CD14-positive monocyte (primary cell): ENCODE measurements at regions of chr13 and their contacts with region 1.

Region 1: GRCh38 chr13:21176220-21176982 is at the starts of genes MRPL57 and SKA3:
- DNase-seq: peak; percentile 89 to 91 (median 90)
- H3K4me3 ChIP-seq: peak within 1 kb of the TSS; percentile 92 to 98 (median 95)
- H3K4me3 Mint-ChIP-seq: peak within 1 kb of the TSS; percentile 98
- H3K27ac ChIP-seq: peak within 1 kb of the TSS; percentile 92 to 93
- H3K27ac Mint-ChIP-seq: peak within 1 kb of the TSS; percentile 86 to 98 (median 95)
- H3K4me1 ChIP-seq: peaks cover 11 to 18% of the 10 kb centered on the region in 2 donors
- H3K4me1 Mint-ChIP-seq: peaks cover 17% of the 10 kb centered on the region
- H3K27me3 ChIP-seq: no peaks in the 10 kb centered on the region
- H3K27me3 Mint-ChIP-seq: no peaks in the 10 kb centered on the region
- CTCF ChIP-seq: no peak
- polyA plus RNA-seq, gene MRPL57: 6.8 to 52.3 (median 41.1) TPM
- polyA plus RNA-seq, gene SKA3: 0.12 to 2.5 (median 0.49) TPM

Region 2: GRCh38 chr13:20940083-20940880 is 236.1 kb before region 1 on chr13:
- intact Hi-C with region 1: loop called (anchors 5 to 10 kb)
- DNase-seq: no peak
- H3K4me3 ChIP-seq: no peak overlapping the region
- H3K4me3 Mint-ChIP-seq: no peak overlapping the region
- H3K27ac ChIP-seq: no peak overlapping the region
- H3K27ac Mint-ChIP-seq: no peak overlapping the region
- H3K4me1 ChIP-seq: peaks cover 12 to 13% of the 10 kb centered on the region in 2 donors
- H3K4me1 Mint-ChIP-seq: peaks cover 13% of the 10 kb centered on the region
- H3K27me3 ChIP-seq: no peaks in the 10 kb centered on the region
- H3K27me3 Mint-ChIP-seq: peaks cover 0 to 7% (median 5%) of the 10 kb centered on the region in 3 donors
- CTCF ChIP-seq: no peak

Region 3: GRCh38 chr13:20945952-20946383 is 230.4 kb before region 1 on chr13:
- intact Hi-C with region 1: loop called (anchors 5 to 10 kb)
- DNase-seq: peak; percentile 38 to 55 (median 55)
- H3K4me3 ChIP-seq: peak overlapping the region; percentile 10 to 66 (median 35)
- H3K4me3 Mint-ChIP-seq: peak overlapping the region; percentile 73 to 88
- H3K27ac ChIP-seq: no peak overlapping the region
- H3K27ac Mint-ChIP-seq: peak overlapping the region in 5 of 7 donors; percentile 15 to 81 (median 72)
- H3K4me1 ChIP-seq: peaks cover 20 to 22% of the 10 kb centered on the region in 2 donors
- H3K4me1 Mint-ChIP-seq: peaks cover 30% of the 10 kb centered on the region
- H3K27me3 ChIP-seq: peaks cover 3 to 7% of the 10 kb centered on the region in 2 donors
- H3K27me3 Mint-ChIP-seq: peaks cover 7 to 29% (median 19%) of the 10 kb centered on the region in 3 donors
- CTCF ChIP-seq: no peak

Region 4: DNA sequence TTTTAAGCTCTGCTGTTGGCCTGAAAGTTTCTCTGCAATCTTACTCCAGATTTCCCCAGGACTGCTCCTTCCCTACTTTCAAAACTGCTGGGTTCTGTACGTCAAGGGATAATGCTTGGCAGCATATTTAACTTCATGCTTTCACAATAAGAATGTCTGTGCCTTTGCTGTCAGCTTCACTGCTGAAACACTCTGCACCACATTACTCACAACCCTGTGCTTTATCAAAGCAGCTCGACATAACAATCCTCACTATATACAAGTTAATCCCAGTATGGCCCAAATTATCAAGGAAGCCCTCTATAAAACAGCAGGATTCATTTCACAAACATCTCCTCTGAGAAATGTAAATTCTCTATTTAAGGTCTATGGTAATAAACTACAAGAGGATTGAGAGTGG is 132.5 kb before region 1 on chr13:
- intact Hi-C with region 1: no loop called
- DNase-seq: no peak
- H3K4me3 ChIP-seq: no peak overlapping the region
- H3K4me3 Mint-ChIP-seq: no peak overlapping the region
- H3K27ac ChIP-seq: no peak overlapping the region
- H3K27ac Mint-ChIP-seq: peak overlapping the region in 1 of 7 donors; percentile 84
- H3K4me1 ChIP-seq: peaks cover 49 to 71% of the 10 kb centered on the region in 2 donors
- H3K4me1 Mint-ChIP-seq: peaks cover 77% of the 10 kb centered on the region
- H3K27me3 ChIP-seq: no peaks in the 10 kb centered on the region
- H3K27me3 Mint-ChIP-seq: peaks cover 0 to 3% (median 0%) of the 10 kb centered on the region in 3 donors
- CTCF ChIP-seq: no peak

Region 5: DNA sequence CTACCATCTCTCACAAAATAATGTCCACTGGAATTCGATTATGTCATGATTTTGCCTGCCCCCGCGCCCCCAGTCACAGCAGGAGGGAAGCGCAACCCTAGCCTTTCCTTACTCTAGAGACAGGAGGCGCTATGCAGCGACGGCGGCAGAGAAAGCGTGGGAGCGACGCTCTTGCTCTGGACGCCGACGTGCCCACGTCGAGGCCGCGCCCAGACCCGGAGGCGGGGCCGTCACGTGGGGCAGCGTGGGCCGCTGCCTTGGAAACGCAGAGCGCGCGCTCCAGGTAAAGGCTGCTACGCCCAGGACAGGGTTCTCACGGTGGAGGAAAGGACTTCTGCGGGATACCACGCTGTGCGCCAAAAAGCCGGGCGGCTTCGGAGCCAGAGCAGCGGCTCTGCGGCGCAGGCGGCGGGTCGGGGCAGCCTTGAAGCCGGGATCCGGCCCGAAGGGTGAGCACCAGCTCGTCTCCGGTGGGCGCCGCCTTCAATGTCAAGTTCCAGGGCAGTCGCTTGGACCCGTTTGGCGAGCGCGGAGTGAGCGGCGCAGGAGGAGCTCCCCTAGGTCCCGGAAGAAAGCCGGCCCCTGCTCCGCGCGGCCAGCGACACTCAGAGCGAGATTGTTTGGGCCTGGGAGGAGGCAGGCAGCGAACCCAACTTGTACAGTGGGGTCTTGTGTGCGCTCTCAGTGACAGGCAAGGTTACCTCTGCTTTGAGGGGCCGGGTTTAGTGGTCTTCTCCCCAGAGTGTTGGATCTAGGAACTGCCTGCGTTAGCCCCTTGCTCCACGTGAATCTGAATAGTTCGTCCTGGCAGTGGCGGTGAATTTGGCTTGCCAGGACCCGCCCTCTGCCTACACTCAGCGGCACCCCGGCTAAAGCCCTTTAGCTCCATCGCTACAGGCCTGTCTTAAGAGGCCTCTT is 121.8 kb after region 1 on chr13:
- intact Hi-C with region 1: loop called (anchors 5 to 10 kb)
- DNase-seq: peak; percentile 82 to 85 (median 84)
- H3K4me3 ChIP-seq: peak overlapping the region; percentile 60 to 97 (median 78)
- H3K4me3 Mint-ChIP-seq: peak overlapping the region; percentile 90 to 92
- H3K27ac ChIP-seq: peak overlapping the region in 1 of 2 donors; percentile 51
- H3K27ac Mint-ChIP-seq: peak overlapping the region; percentile 23 to 85 (median 76)
- H3K4me1 ChIP-seq: peaks cover 16 to 22% of the 10 kb centered on the region in 2 donors
- H3K4me1 Mint-ChIP-seq: peaks cover 19% of the 10 kb centered on the region
- H3K27me3 ChIP-seq: no peaks in the 10 kb centered on the region
- H3K27me3 Mint-ChIP-seq: peaks cover 0 to 4% (median 0%) of the 10 kb centered on the region in 3 donors
- CTCF ChIP-seq: peak; percentile 91

Region 6: GRCh38 chr13:21603531-21604448 is 427.4 kb after region 1 on chr13 and contains the start of gene MICU2:
- intact Hi-C with region 1: loop called in 1 of 2 experiments (anchors 10 kb)
- DNase-seq: peak; percentile 91 to 93 (median 92)
- H3K4me3 ChIP-seq: peak within 1 kb of the TSS; percentile 60 to 84 (median 83)
- H3K4me3 Mint-ChIP-seq: peak within 1 kb of the TSS; percentile 84 to 89
- H3K27ac ChIP-seq: peak within 1 kb of the TSS; percentile 90 to 91
- H3K27ac Mint-ChIP-seq: peak within 1 kb of the TSS; percentile 87 to 98 (median 95)
- H3K4me1 ChIP-seq: peaks cover 12 to 16% of the 10 kb centered on the region in 2 donors
- H3K4me1 Mint-ChIP-seq: peaks cover 21% of the 10 kb centered on the region
- H3K27me3 ChIP-seq: peaks cover 0 to 4% of the 10 kb centered on the region in 2 donors
- H3K27me3 Mint-ChIP-seq: peaks cover 8 to 18% (median 11%) of the 10 kb centered on the region in 3 donors
- CTCF ChIP-seq: no peak
- polyA plus RNA-seq, gene MICU2: 21.5 to 32.1 (median 26.8) TPM